HepG2 (cell line): ENCODE measurements at regions of chr1 and their contacts with region 1.

Region 1: GRCh38 chr1:84944767-84945486 is 51.9 kb upstream of the LPAR3 start:
- DNase-seq: peak; percentile 84
- ATAC-seq: peak; percentile 95
- H3K4me3 ChIP-seq: peak overlapping the region; percentile 36 to 60 (median 57)
- H3K27ac ChIP-seq: no peak overlapping the region
- H3K4me1 ChIP-seq: peaks cover 5% of the 10 kb centered on the region
- H3K27me3 ChIP-seq: peaks cover 0 to 9% of the 10 kb centered on the region in 2 experiments; a peak in 1 of 5 replicates
- CTCF ChIP-seq: peak; percentile 77
- EP300 ChIP-seq: no peak
- POLR2A ChIP-seq: no peak
- RAD21 ChIP-seq: peak; percentile 55; the same call in 1 of the 2 replicates

Region 2: GRCh38 chr1:85027242-85027983 is 82.5 kb after region 1 on chr1:
- CTCF ChIA-PET with region 1: interaction called, 10 read pairs
- POLR2A ChIA-PET with region 1: no interaction called
- in situ Hi-C with region 1: no loop called
- intact Hi-C with region 1: loop called (anchors 1 kb)
- DNase-seq: no peak
- ATAC-seq: peak; percentile 84
- H3K4me3 ChIP-seq: no peak overlapping the region
- H3K27ac ChIP-seq: no peak overlapping the region
- H3K4me1 ChIP-seq: no peaks in the 10 kb centered on the region
- H3K27me3 ChIP-seq: no peaks in the 10 kb centered on the region
- CTCF ChIP-seq: no peak; the same call in 1 of the 2 replicates
- EP300 ChIP-seq: no peak
- POLR2A ChIP-seq: no peak
- RAD21 ChIP-seq: no peak

Region 3: DNA sequence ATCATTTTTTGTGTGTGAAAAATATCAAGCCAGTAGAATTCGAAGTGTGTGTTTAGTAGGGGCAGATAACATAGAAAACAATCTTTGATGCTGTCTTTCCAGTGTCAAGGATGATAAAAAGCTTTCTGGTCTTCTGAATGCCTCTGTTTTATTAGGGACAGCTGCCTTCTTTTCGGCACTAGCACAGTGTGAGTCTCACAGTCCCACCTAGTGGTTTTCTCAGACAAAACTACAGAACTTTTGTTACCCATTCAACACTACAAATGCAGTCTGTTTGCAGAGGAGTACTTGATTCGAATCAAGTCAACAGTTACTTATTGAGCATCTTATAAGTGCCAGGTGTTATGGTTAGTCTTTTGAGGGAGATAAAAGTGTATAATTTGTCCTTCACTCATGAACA is 134.0 kb after region 1 on chr1:
- CTCF ChIA-PET with region 1: interaction called, 8 read pairs
- POLR2A ChIA-PET with region 1: no interaction called
- in situ Hi-C with region 1: no loop called
- intact Hi-C with region 1: loop called (anchors 1 kb)
- DNase-seq: no peak
- ATAC-seq: peak; percentile 48; the same call in 2 of the 3 replicates
- H3K4me3 ChIP-seq: no peak overlapping the region
- H3K27ac ChIP-seq: no peak overlapping the region
- H3K4me1 ChIP-seq: no peaks in the 10 kb centered on the region
- H3K27me3 ChIP-seq: no peaks in the 10 kb centered on the region; a peak in 2 of 5 replicates
- CTCF ChIP-seq: peak; percentile 24
- EP300 ChIP-seq: no peak
- POLR2A ChIP-seq: no peak
- RAD21 ChIP-seq: no peak

Region 4: GRCh38 chr1:85109475-85109874 is 164.5 kb after region 1 on chr1:
- CTCF ChIA-PET with region 1: no interaction called
- POLR2A ChIA-PET with region 1: no interaction called
- in situ Hi-C with region 1: no loop called
- intact Hi-C with region 1: loop called (anchors 10 kb)
- DNase-seq: peak; percentile 54
- ATAC-seq: peak; percentile 99
- H3K4me3 ChIP-seq: no peak overlapping the region
- H3K27ac ChIP-seq: no peak overlapping the region
- H3K4me1 ChIP-seq: no peaks in the 10 kb centered on the region
- H3K27me3 ChIP-seq: no peaks in the 10 kb centered on the region; a peak in 1 of 5 replicates
- CTCF ChIP-seq: peak; percentile 85
- EP300 ChIP-seq: no peak
- POLR2A ChIP-seq: no peak
- RAD21 ChIP-seq: peak; percentile 79

Region 5: GRCh38 chr1:85200870-85201339 is 256.0 kb after region 1 on chr1 and contains the start of gene SYDE2:
- CTCF ChIA-PET with region 1: no interaction called
- POLR2A ChIA-PET with region 1: no interaction called
- in situ Hi-C with region 1: no loop called
- intact Hi-C with region 1: loop called (anchors 2 kb)
- DNase-seq: peak; percentile 67
- ATAC-seq: peak; percentile 91
- H3K4me3 ChIP-seq: peak within 1 kb of the TSS; percentile 85 to 97 (median 85)
- H3K27ac ChIP-seq: peak within 1 kb of the TSS; percentile 86
- H3K4me1 ChIP-seq: peaks cover 28% of the 10 kb centered on the region
- H3K27me3 ChIP-seq: no peaks in the 10 kb centered on the region; a peak in 1 of 5 replicates
- CTCF ChIP-seq: no peak; the same call in 1 of the 2 replicates
- EP300 ChIP-seq: no peak
- POLR2A ChIP-seq: peak; percentile 59 to 67; a peak in 3 of 4 replicates
- RAD21 ChIP-seq: no peak
- total RNA-seq, gene SYDE2: 5.3 and 7.9 TPM in 2 replicates

Region 6: GRCh38 chr1:85259118-85259911 is 314.4 kb after region 1 on chr1 and contains the start of gene C1orf52:
- CTCF ChIA-PET with region 1: interaction called, 25 read pairs
- POLR2A ChIA-PET with region 1: interaction called, 7 read pairs
- in situ Hi-C with region 1: loop called (anchors 5 kb)
- intact Hi-C with region 1: loop called (anchors 1 kb)
- DNase-seq: peak; percentile 78
- ATAC-seq: peak; percentile 97
- H3K4me3 ChIP-seq: peak within 1 kb of the TSS; percentile 93 to 100 (median 99)
- H3K27ac ChIP-seq: peak within 1 kb of the TSS; percentile 73
- H3K4me1 ChIP-seq: peaks cover 40% of the 10 kb centered on the region
- H3K27me3 ChIP-seq: no peaks in the 10 kb centered on the region; a peak in 1 of 5 replicates
- CTCF ChIP-seq: peak; percentile 92
- EP300 ChIP-seq: 0 out of 4 replicates have a peak, but pooled peaks of 1 of the 2 experiments have one; percentile 40
- POLR2A ChIP-seq: peak; percentile 87 to 91
- RAD21 ChIP-seq: peak; percentile 71
- total RNA-seq, gene C1orf52: 19.4 and 23.0 TPM in 2 replicates